ENCODE measurements at regions of chr19 and their contacts with region 1.

Region 1: GRCh38 chr19:34639491-34640085 is 37.4 kb downstream of the SCGB2B2 start:
- H3K4me3 Mint-ChIP-seq: no peak overlapping the region
- H3K27ac Mint-ChIP-seq: no peak overlapping the region
- H3K4me1 Mint-ChIP-seq: no peaks in the 10 kb centered on the region
- H3K27me3 Mint-ChIP-seq: no peaks in the 10 kb centered on the region

Region 2: DNA sequence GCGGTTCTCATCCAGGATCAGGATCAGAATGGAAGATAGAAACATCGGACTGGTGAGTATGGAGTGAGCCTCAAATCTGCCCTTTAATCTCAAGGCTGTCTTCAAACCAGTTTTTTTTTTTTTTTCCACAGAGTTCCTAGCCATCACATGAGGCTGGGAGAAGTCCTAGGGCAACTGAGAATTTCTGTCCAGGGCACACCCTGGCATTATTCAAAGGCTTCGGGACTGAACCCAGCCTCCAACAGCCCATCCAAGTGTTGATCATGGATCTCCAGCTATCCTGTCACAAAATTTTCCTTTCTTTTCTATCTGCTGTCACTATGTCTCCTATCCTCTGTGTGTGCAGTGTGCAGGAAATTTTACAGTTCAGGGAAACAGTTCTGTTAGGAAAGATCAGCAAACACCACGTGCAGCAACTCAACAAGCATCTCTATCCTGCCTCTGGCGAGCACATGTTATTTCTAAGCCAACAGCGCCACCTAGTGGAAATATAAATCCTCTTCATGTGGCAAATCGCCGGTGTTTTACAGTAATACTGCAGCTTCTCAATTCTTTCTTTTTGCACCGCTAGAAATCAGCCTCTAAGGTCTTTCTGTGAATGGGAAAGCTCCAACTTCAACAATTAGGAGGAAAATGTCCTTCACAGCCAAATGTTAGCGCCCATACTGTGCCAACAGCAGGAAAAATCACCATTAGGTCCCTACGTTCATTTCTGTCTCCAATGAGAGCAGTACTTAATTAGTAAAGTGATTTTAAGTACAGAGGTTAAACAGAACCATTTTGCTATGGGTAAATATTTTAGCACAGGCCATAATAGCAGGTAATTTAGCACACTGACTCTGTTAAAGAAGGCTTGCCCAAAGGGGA is 73.0 kb after region 1 on chr19:
- intact Hi-C with region 1: loop called (anchors 1 kb)
- H3K4me3 Mint-ChIP-seq: no peak overlapping the region
- H3K27ac Mint-ChIP-seq: no peak overlapping the region
- H3K4me1 Mint-ChIP-seq: no peaks in the 10 kb centered on the region
- H3K27me3 Mint-ChIP-seq: peaks cover 8% of the 10 kb centered on the region